Transverse colon (tissue), 4 donors: ENCODE measurements at regions of chr12 and their contacts with region 1.

Region 1: DNA sequence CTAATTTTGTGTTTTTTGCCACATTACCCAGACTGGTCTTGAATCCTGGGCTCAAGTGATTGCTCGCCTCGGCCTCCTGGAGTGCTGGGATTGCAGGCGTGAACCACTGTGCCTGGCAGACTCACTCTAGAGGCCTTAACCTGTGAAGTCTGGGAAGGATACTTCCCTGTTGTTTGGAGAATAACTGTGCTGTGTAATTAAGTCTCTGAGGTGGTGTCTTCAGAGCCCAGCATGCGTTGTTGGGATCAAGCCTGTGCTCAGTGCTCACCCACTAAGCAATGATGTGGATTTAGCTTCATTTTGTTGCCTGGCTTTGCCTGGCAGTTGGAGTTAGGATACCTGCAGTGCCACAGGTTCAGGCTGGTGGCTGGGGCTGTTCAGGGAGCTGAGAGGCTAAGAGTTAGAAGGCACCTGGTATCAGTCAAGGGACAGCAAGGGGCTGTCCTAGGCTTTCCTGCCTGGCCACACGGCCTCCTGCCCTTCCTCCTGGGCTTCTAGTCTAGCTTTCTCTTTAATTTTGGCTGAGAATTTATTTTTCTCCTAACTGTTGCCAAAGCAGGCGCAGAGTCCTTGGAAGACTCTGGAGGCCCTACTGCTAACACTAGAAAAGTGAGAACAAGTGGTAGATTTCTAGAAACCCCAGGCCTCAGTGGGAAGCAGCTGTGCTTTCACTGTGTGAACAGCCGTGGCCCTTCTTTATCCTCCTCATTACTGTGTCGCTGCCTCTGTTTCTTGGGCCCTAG is 38.5 kb downstream of the EP400 start:
- DNase-seq: no peak
- H3K4me3 ChIP-seq: no peak overlapping the region
- H3K27ac ChIP-seq: no peak overlapping the region
- H3K4me1 ChIP-seq: no peaks in the 10 kb centered on the region
- H3K27me3 ChIP-seq: no peaks in the 10 kb centered on the region
- CTCF ChIP-seq: no peak
- EP300 ChIP-seq: no peak
- POLR2A ChIP-seq: no peak

Region 2: GRCh38 chr12:131242741-131243496 is 745.3 kb before region 1 on chr12:
- in situ Hi-C with region 1: no loop called
- intact Hi-C with region 1: no loop called
- DNase-seq: no peak
- H3K4me3 ChIP-seq: no peak overlapping the region
- H3K27ac ChIP-seq: no peak overlapping the region
- H3K4me1 ChIP-seq: no peaks in the 10 kb centered on the region
- H3K27me3 ChIP-seq: peaks cover 6% of the 10 kb centered on the region
- CTCF ChIP-seq: no peak
- EP300 ChIP-seq: no peak
- POLR2A ChIP-seq: no peak

Region 3: GRCh38 chr12:131454418-131455217 is 533.6 kb before region 1 on chr12:
- in situ Hi-C with region 1: no loop called
- intact Hi-C with region 1: no loop called
- DNase-seq: no peak
- H3K4me3 ChIP-seq: no peak overlapping the region
- H3K27ac ChIP-seq: no peak overlapping the region
- H3K4me1 ChIP-seq: no peaks in the 10 kb centered on the region
- H3K27me3 ChIP-seq: peaks cover 5% of the 10 kb centered on the region
- CTCF ChIP-seq: peak; percentile 31 to 55 (median 48)
- EP300 ChIP-seq: no peak
- POLR2A ChIP-seq: no peak

Region 4: GRCh38 chr12:131603939-131604795 is 384.1 kb before region 1 on chr12:
- in situ Hi-C with region 1: no loop called
- intact Hi-C with region 1: loop called (anchors 5 kb)
- DNase-seq: peak; percentile 31
- H3K4me3 ChIP-seq: no peak overlapping the region
- H3K27ac ChIP-seq: no peak overlapping the region
- H3K4me1 ChIP-seq: peaks cover 0 to 20% (median 3%) of the 10 kb centered on the region in 4 donors
- H3K27me3 ChIP-seq: peaks cover 20% of the 10 kb centered on the region
- CTCF ChIP-seq: no peak
- EP300 ChIP-seq: no peak
- POLR2A ChIP-seq: no peak